GM10248 (cell line): ENCODE measurements at regions of chr1 and their contacts with region 1.

Region 1: GRCh38 chr1:200971955-200972711 is 51.4 kb downstream of the KIF21B start:
- DNase-seq: peak; percentile 75
- CTCF ChIP-seq: peak; percentile 59

Region 2: GRCh38 chr1:200866521-200866920 is 105.6 kb before region 1 on chr1:
- CTCF ChIA-PET with region 1: interaction called, 14 read pairs
- POLR2A ChIA-PET with region 1: no interaction called
- DNase-seq: peak; percentile 82
- CTCF ChIP-seq: no peak

Region 3: DNA sequence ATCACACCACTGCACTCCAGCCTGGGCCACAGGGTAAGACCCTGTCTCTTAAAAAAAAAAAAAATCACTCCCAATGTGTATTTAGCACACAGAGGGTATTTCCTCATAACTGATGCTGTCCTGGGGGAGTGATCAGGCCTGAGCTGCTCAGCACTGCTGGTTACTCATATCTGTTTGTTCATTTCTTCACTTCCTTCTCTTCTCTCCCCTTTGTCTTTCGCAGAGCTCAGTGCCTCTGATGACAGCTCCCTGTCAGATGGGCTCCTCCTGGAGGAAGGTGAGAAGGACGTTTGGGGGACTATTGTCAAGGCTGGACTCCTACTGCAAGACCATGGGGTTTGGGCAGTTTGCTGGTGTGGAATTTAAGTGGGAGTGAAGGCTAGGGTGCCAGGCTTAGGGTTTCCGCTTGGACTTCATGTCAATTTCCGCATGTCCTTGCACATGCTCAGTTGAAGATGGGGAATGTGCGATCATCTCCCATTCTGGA is 64.5 kb before region 1 on chr1:
- CTCF ChIA-PET with region 1: interaction called, 15 read pairs
- POLR2A ChIA-PET with region 1: no interaction called
- DNase-seq: peak; percentile 72
- CTCF ChIP-seq: no peak

Region 4: GRCh38 chr1:200959411-200959921 is 12.7 kb before region 1 on chr1:
- CTCF ChIA-PET with region 1: interaction called, 33 read pairs
- POLR2A ChIA-PET with region 1: no interaction called
- DNase-seq: peak; percentile 4
- CTCF ChIP-seq: no peak

Region 5: GRCh38 chr1:201023517-201023902 is 51.4 kb after region 1 on chr1 and contains the start of gene KIF21B:
- CTCF ChIA-PET with region 1: interaction called, 165 read pairs
- POLR2A ChIA-PET with region 1: interaction called, 5 read pairs
- DNase-seq: peak; percentile 94
- CTCF ChIP-seq: no peak

Region 6: DNA sequence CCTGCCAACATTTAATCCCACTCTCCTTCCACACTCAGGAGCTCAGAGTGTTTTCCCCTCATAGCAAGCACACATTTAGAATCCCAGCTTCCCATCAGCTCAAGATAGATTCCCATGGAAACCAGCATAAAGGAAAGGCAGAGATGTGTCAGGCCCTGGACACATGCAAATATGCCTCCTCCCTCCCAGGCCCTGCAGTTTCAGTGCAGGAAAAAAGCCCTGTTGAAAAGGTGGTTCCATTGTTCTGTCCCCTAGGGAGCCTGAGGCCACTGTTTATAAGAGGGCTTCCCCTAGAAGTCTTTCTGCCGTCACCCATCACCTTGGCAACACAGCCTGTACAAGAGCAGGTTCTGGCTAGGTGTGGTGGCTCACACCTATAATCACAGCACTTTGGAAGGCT is 136.5 kb after region 1 on chr1:
- CTCF ChIA-PET with region 1: interaction called, 88 read pairs
- POLR2A ChIA-PET with region 1: no interaction called
- DNase-seq: no peak
- CTCF ChIP-seq: no peak

Region 7: DNA sequence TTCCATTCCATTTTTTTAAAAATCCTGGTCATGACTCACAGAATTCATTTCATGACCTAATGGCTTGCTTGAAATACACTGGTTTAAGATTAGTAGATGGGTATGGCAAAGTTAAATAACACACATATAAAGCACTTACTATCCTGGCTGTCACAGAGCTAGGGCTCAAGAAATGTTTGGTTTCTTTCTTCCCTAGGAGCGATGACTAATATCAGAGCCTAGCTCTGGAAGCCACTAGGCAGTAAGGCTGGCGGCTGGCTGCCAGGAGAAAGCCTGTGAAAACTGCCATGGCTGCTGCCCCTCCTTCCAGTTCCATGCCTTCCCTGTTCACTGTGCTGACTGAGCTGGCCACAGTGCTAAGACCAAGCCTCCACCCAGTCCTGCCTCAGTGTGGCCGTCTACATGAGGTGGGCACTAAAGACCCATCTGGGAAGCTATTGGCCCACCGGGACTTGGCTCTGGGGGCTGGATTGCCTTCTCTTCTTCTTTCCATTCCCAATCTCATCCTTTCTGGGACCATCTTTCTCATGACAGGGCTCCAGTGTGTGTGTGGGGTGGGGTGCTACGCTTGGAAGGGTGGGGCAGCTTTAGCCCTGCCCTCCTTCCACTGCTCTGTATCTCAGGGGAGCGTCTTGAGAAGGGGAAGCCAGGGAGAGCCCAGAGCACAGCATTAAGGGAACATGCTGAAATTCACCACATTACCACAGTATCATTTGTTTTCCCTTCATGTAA is 165.6 kb after region 1 on chr1:
- CTCF ChIA-PET with region 1: no interaction called
- POLR2A ChIA-PET with region 1: no interaction called
- DNase-seq: no peak
- CTCF ChIP-seq: no peak

Region 8: GRCh38 chr1:201229771-201230635 is 257.9 kb after region 1 on chr1:
- CTCF ChIA-PET with region 1: no interaction called
- POLR2A ChIA-PET with region 1: no interaction called
- DNase-seq: peak; percentile 7
- CTCF ChIP-seq: no peak

Region 9: GRCh38 chr1:201602413-201603265 is 630.5 kb after region 1 on chr1:
- CTCF ChIA-PET with region 1: no interaction called
- POLR2A ChIA-PET with region 1: no interaction called
- DNase-seq: no peak
- CTCF ChIP-seq: no peak